Right lobe of liver (tissue), 6 donors: ENCODE measurements at regions of chr2 and their contacts with region 1.

Region 1: GRCh38 chr2:101157272-101157671 is 6.1 kb upstream of the TBC1D8 start:
- DNase-seq: no peak
- ATAC-seq: no peak
- H3K4me3 ChIP-seq: no peak overlapping the region
- H3K27ac ChIP-seq: no peak overlapping the region
- H3K4me1 ChIP-seq: peaks cover 0 to 7% (median 2%) of the 10 kb centered on the region in 4 donors
- H3K27me3 ChIP-seq: no peaks in the 10 kb centered on the region
- CTCF ChIP-seq: no peak
- POLR2A ChIP-seq: no peak

Region 2: DNA sequence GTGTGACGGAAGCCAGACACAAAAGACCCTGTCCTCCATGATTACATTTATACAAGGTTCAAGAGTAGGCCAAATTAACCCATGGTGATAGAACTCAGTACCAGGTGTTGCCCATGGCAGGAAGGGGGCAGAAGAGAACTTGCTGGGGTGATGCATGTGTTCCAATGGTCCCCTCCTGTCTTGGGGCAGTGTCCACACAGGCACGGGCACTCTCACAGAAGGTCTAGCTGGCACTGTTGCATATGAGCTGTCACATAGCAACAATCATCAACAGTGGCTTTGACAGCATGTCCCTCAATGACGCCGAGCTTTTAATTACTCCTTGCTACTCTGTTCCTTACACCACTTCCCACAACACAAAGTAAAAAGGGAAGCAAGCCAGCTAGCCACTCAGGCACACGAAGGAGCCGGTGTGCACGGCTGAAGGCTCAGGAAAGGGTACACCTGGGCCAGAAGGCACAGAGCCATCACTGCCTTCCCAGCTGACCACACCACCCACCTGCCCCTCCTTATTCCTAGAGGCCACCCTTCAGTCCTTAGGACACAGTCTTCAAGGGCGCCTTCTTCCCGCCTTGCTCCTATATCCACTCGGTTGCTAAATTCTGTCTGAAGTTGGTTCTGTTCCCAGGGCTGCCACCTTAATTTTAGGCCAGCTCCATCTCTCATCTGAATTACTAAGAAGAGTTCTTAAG is 126.3 kb before region 1 on chr2:
- intact Hi-C with region 1: loop called in 1 of 2 experiments (anchors 5 kb)
- DNase-seq: no peak
- ATAC-seq: peak in 2 of 4 donors; percentile 17 to 23
- H3K4me3 ChIP-seq: no peak overlapping the region
- H3K27ac ChIP-seq: no peak overlapping the region
- H3K4me1 ChIP-seq: no peaks in the 10 kb centered on the region
- H3K27me3 ChIP-seq: no peaks in the 10 kb centered on the region
- CTCF ChIP-seq: no peak
- POLR2A ChIP-seq: no peak